ENCODE measurements at regions of chr14 and their contacts with region 1.

Region 1: DNA sequence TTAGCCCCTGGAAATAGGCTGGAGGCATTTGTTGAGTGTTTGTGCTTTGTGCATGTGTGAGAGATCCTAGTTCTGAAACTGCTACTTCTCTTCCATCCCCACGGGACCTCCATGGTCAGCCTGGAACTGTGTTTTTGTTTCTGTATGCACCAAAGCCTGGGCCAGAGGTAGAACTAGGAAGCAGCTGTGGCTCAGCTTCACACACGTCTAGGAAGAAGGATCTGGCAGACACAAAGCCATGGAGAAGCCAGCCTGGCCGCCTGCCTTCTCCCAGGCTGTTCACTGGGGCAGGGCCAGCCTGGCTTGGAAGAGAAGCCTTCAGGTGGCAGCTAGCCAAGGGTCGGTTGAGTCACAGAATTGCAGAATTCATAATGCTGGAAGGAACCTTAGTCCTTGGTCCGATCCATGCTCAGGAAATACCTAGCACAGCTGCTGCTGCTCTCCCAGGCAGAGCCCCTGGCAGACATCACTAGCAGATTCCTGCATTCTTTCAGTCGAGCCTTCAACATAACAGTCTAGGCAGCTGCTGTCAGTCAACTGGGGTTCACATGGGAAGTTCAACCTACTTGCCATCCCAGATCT is 27.0 kb downstream of the RIN3 start:
- DNase-seq: peak; percentile 93
- ATAC-seq: peak; percentile 95

Region 2: GRCh38 chr14:92400579-92401444 is 139.8 kb before region 1 on chr14:
- intact Hi-C with region 1: no loop called
- DNase-seq: no peak
- ATAC-seq: peak; percentile 37

Region 3: DNA sequence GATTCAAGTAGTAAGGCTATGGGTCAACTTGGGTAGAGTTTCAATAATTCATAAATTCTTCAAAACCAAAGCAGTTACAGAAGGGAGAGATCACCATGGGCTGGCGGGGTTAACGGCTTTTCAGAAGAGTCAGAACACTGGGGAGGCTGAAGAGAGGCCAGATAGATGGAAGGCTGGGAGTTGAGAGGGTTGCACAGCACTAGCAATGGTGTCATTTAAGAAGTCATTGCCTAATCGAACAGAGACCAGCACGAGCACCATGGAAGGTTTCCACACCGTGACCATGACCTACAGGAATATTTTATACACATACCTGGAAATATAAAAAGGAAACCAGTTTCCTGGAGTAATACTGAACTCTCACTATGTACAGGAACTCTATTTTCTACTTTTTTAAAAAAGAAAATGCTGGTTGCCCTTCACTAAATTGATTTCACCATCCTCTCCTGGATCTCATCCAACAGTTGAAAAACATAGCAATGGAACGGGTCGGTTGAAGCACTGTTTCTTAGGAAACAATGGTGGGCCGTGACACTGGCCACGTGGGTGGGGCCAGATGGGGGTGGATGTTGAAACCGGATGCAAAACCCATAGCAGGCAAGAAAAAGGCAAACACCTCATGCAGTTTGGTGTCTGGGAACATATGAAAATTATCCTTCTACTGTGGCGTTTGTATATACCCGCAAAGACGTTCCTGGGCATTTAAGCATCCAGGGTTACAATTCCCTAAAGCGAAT is 64.9 kb before region 1 on chr14:
- intact Hi-C with region 1: loop called (anchors 5 kb)
- DNase-seq: peak; percentile 85
- ATAC-seq: peak; percentile 75

Region 4: GRCh38 chr14:92577321-92577742 is 36.8 kb after region 1 on chr14:
- intact Hi-C with region 1: no loop called
- DNase-seq: no peak
- ATAC-seq: no peak

Region 5: DNA sequence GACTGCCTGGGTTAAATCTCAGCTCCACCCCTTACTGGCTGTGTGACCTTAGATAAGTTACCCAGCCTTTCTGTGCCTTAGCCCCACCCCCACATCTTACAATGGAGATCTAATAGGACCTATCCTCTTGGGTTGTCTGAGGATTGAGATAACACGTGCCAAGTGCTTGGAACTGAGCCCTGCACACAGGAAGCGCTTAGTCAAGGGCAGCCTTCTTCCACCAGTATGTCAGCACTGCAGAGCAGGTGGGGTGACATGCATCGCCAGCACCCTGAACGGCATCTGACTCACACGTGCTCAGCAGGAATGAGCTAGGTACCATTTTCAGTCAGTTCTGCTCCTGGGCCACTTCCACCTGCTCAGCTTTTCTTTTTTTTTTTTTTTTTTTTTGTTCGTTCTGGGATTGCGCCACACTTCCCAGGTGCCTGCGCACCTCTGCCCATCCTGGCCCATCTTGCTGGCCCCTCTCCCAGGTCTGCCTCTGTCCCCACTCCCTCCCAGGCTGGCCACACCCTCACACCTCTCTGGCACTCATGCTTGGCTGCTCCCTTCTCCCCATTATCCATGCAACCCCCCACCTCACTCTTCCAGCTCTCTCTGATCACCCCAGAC is 188.3 kb after region 1 on chr14:
- intact Hi-C with region 1: no loop called
- DNase-seq: no peak
- ATAC-seq: no peak